Mammary epithelial cell (primary cell): ENCODE measurements at regions of chr11 and their contacts with region 1.

Region 1: GRCh38 chr11:86620891-86621521 is 51.4 kb downstream of the ME3 start:
- DNase-seq: no peak
- H3K4me3 ChIP-seq: no peak overlapping the region
- H3K27ac ChIP-seq: no peak overlapping the region
- H3K4me1 ChIP-seq: peaks cover 14% of the 10 kb centered on the region
- H3K27me3 ChIP-seq: no peaks in the 10 kb centered on the region
- CTCF ChIP-seq: no peak

Region 2: DNA sequence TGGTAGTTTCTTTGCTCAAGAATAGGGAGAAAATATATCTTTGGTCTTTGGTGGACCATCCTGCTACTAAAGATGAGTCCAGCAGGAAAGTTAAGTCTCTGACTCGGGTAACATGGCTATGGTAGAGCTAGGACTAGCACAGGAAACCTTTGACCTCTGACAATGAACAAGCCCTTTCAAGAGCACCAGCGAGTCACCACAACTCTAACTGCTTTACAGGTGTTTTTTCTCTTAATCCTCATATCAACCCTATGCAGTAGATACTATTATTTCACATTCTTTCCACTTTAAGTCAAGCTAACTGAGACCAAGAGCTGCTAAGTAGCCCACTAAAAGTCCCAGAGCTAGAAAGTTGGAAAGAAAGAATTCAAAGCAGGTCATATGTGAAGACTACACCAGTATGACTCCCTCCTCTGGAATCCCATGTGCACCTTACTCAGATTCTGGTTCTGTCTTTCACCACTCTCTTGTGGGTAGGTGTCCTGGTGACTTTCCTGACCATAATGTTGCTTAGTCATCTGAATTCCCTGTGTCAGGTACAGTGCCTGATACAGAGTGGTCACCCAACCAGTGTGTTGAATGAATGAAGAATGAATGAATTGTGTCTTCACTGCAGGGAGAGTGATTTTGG is 105.2 kb after region 1 on chr11:
- CTCF ChIA-PET with region 1: no interaction called
- dilution Hi-C with region 1: no loop called
- in situ Hi-C with region 1: no loop called
- intact Hi-C with region 1: loop called (anchors 5 kb)
- DNase-seq: peak; percentile 95
- H3K4me3 ChIP-seq: no peak overlapping the region
- H3K27ac ChIP-seq: peak overlapping the region; percentile 66
- H3K4me1 ChIP-seq: peaks cover 42% of the 10 kb centered on the region
- H3K27me3 ChIP-seq: no peaks in the 10 kb centered on the region
- CTCF ChIP-seq: no peak

Region 3: GRCh38 chr11:86749376-86749775 is 128.4 kb after region 1 on chr11:
- CTCF ChIA-PET with region 1: no interaction called
- dilution Hi-C with region 1: no loop called
- in situ Hi-C with region 1: no loop called
- intact Hi-C with region 1: no loop called
- DNase-seq: no peak
- H3K4me3 ChIP-seq: no peak overlapping the region
- H3K27ac ChIP-seq: no peak overlapping the region
- H3K4me1 ChIP-seq: peaks cover 7% of the 10 kb centered on the region
- H3K27me3 ChIP-seq: no peaks in the 10 kb centered on the region
- CTCF ChIP-seq: peak in 1 of 2 donors; percentile 2

Region 4: GRCh38 chr11:86784241-86784681 is 163.3 kb after region 1 on chr11:
- CTCF ChIA-PET with region 1: no interaction called
- dilution Hi-C with region 1: no loop called
- in situ Hi-C with region 1: no loop called
- intact Hi-C with region 1: loop called (anchors 1 kb)
- DNase-seq: no peak
- H3K4me3 ChIP-seq: no peak overlapping the region
- H3K27ac ChIP-seq: no peak overlapping the region
- H3K4me1 ChIP-seq: no peaks in the 10 kb centered on the region
- H3K27me3 ChIP-seq: no peaks in the 10 kb centered on the region
- CTCF ChIP-seq: no peak